HCT116 (cell line): ENCODE measurements at regions of chr6 and their contacts with region 1.

Region 1: GRCh38 chr6:117840541-117840983 is 66.5 kb upstream of the SLC35F1 start:
- DNase-seq: peak; percentile 68
- ATAC-seq: peak; percentile 82
- H3K4me3 ChIP-seq: no peak overlapping the region
- H3K27ac ChIP-seq: no peak overlapping the region
- H3K4me1 ChIP-seq: no peaks in the 10 kb centered on the region
- H3K27me3 ChIP-seq: no peaks in the 10 kb centered on the region
- CTCF ChIP-seq: peak; percentile 41 to 75 (median 73); a peak in 5 of 6 replicates
- POLR2A ChIP-seq: no peak
- RAD21 ChIP-seq: peak; percentile 83

Region 2: GRCh38 chr6:118207947-118208346 is 367.4 kb after region 1 on chr6:
- CTCF ChIA-PET with region 1: no interaction called
- POLR2A ChIA-PET with region 1: no interaction called
- RAD21 ChIA-PET with region 1: no interaction called
- intact Hi-C with region 1: no loop called
- DNase-seq: no peak
- ATAC-seq: no peak
- H3K4me3 ChIP-seq: no peak overlapping the region
- H3K27ac ChIP-seq: no peak overlapping the region
- H3K4me1 ChIP-seq: no peaks in the 10 kb centered on the region
- H3K27me3 ChIP-seq: no peaks in the 10 kb centered on the region
- CTCF ChIP-seq: no peak
- POLR2A ChIP-seq: no peak
- RAD21 ChIP-seq: no peak

Region 3: GRCh38 chr6:118263921-118264486 is 423.4 kb after region 1 on chr6:
- CTCF ChIA-PET with region 1: interaction called, 10 read pairs
- POLR2A ChIA-PET with region 1: no interaction called
- RAD21 ChIA-PET with region 1: no interaction called
- intact Hi-C with region 1: loop called (anchors 1 kb)
- DNase-seq: peak; percentile 15
- ATAC-seq: peak; percentile 65
- H3K4me3 ChIP-seq: no peak overlapping the region
- H3K27ac ChIP-seq: no peak overlapping the region
- H3K4me1 ChIP-seq: no peaks in the 10 kb centered on the region
- H3K27me3 ChIP-seq: no peaks in the 10 kb centered on the region
- CTCF ChIP-seq: peak; percentile 16 to 50 (median 43); a peak in 3 of 6 replicates
- POLR2A ChIP-seq: no peak
- RAD21 ChIP-seq: peak; percentile 62

Region 4: GRCh38 chr6:118509009-118509617 is 668.6 kb after region 1 on chr6:
- CTCF ChIA-PET with region 1: no interaction called
- POLR2A ChIA-PET with region 1: no interaction called
- RAD21 ChIA-PET with region 1: no interaction called
- intact Hi-C with region 1: loop called (anchors 10 kb)
- DNase-seq: peak; percentile 35
- ATAC-seq: peak; percentile 58; the same call in 1 of the 2 replicates
- H3K4me3 ChIP-seq: no peak overlapping the region
- H3K27ac ChIP-seq: no peak overlapping the region
- H3K4me1 ChIP-seq: no peaks in the 10 kb centered on the region
- H3K27me3 ChIP-seq: no peaks in the 10 kb centered on the region
- CTCF ChIP-seq: peak; percentile 73 to 78 (median 76)
- POLR2A ChIP-seq: no peak
- RAD21 ChIP-seq: peak; percentile 83

Region 5: DNA sequence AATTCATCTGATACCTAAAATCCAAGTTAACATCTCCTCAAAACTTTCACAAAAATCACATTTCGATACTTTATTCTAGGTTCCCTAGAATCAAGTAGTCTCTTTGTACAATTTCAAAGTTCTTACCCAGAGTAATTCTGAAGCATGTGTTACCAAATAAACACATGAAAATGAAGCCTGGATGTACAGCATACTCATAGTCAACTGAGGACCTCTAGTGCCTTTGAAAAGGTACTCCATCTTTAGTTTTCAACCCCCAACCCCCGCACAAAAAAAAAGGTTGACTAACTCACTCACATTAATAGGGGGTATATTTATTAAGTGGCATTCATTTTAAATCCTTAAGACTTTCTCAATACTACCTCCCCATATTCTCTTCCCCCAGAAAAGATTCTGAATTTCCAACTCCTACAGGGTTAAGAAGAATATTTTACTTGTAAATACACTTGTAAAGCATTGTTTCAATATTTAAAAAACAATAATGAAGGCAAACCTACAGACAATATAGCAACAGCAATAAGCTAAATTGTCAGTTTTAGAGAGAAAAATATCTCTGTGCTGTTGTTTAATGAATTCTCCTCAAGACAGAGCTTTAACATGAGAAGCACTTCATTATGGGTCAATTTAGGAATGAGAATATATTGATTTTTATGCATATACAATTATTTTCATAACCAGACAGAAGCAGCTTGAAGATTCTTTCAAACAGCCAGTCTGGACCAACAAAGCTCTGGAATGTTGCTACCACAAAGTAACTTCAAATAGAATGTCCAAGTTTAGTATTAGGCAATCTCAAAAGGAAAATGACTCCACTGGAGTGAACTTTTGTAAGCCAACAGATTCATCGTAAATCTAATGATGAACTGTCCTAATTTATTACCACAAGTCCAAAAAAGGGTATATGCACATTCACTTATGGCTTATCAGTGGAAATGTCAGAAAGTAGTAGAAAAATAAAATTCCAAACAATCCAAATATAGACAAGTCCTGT is 710.8 kb after region 1 on chr6:
- CTCF ChIA-PET with region 1: interaction called, 4 read pairs
- POLR2A ChIA-PET with region 1: no interaction called
- RAD21 ChIA-PET with region 1: no interaction called
- intact Hi-C with region 1: loop called (anchors 1 kb)
- DNase-seq: peak; percentile 37
- ATAC-seq: peak; percentile 84
- H3K4me3 ChIP-seq: no peak overlapping the region
- H3K27ac ChIP-seq: no peak overlapping the region
- H3K4me1 ChIP-seq: no peaks in the 10 kb centered on the region
- H3K27me3 ChIP-seq: no peaks in the 10 kb centered on the region
- CTCF ChIP-seq: peak; percentile 44 to 64 (median 60); a peak in 4 of 6 replicates
- POLR2A ChIP-seq: no peak
- RAD21 ChIP-seq: peak; percentile 76

Region 6: GRCh38 chr6:118580585-118581419 is 740.2 kb after region 1 on chr6:
- CTCF ChIA-PET with region 1: interaction called, 7 read pairs
- POLR2A ChIA-PET with region 1: no interaction called
- RAD21 ChIA-PET with region 1: no interaction called
- intact Hi-C with region 1: loop called (anchors 5 kb)
- DNase-seq: peak; percentile 49
- ATAC-seq: peak; percentile 95
- H3K4me3 ChIP-seq: no peak overlapping the region
- H3K27ac ChIP-seq: no peak overlapping the region
- H3K4me1 ChIP-seq: no peaks in the 10 kb centered on the region
- H3K27me3 ChIP-seq: no peaks in the 10 kb centered on the region
- CTCF ChIP-seq: peak; percentile 57 to 69 (median 59); a peak in 5 of 6 replicates
- POLR2A ChIP-seq: no peak
- RAD21 ChIP-seq: peak; percentile 78

Region 7: DNA sequence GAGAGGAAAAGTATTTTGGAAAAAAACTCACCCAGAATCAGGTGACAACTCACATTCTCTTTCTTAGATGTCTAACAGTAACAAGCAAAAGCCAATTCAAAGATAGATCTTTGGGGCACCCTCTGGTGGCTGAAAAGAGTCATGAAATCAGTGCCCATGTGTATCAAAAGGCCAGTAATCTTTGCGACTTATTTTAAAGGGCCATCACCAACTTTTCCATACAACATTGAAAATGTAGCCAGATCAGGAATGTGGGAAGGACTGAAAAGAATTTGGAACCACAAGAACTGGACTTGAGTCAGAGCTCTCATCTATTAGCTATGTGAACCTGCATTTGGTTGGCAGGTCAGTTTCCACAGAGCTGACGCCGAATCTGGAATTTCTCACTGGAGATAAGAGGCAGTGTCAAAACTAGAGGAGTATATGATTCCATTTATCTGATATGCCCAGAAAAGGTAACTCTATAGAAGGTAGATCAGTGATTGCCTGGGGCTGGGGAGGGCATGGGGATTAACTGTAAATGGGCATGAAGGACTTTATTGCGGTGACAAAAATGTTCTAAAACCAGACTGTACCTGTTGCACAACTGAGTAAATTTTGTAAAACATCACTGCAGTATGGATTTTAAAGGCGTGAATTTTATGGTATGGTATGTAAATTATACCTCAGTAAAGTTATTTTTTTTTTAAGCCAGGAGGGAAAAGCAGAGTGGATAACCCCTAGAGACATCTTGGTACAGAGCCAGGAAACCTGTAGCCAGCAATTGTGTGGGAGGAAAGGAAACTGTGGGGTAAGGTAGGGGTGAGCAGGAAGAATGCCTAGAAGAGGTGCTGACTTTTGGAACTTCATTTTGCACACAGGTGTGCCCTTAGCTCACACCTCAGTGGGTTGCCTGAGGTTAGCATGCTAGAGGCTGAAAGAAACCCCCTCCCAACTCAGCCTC is 936.3 kb after region 1 on chr6:
- CTCF ChIA-PET with region 1: no interaction called
- POLR2A ChIA-PET with region 1: no interaction called
- RAD21 ChIA-PET with region 1: no interaction called
- intact Hi-C with region 1: loop called (anchors 1 kb)
- DNase-seq: peak; percentile 57
- ATAC-seq: peak; percentile 96
- H3K4me3 ChIP-seq: no peak overlapping the region
- H3K27ac ChIP-seq: no peak overlapping the region
- H3K4me1 ChIP-seq: peaks cover 8% of the 10 kb centered on the region in 2 experiments; a peak in 2 of 4 replicates
- H3K27me3 ChIP-seq: no peaks in the 10 kb centered on the region
- CTCF ChIP-seq: peak; percentile 59 to 84 (median 81); a peak in 5 of 6 replicates
- POLR2A ChIP-seq: no peak
- RAD21 ChIP-seq: peak; percentile 66